Aorta (tissue), 5 donors: ENCODE measurements at regions of chr16 and their contacts with region 1.

Region 1: GRCh38 chr16:78333808-78334207 is 234.4 kb downstream of the WWOX start:
- DNase-seq: no peak
- ATAC-seq: no peak
- H3K4me3 ChIP-seq: no peak overlapping the region
- H3K27ac ChIP-seq: no peak overlapping the region
- H3K4me1 ChIP-seq: no peaks in the 10 kb centered on the region
- H3K27me3 ChIP-seq: no peaks in the 10 kb centered on the region

Region 2: GRCh38 chr16:77850636-77851333 is 483.0 kb before region 1 on chr16:
- intact Hi-C with region 1: no loop called
- DNase-seq: no peak
- ATAC-seq: no peak
- H3K4me3 ChIP-seq: no peak overlapping the region
- H3K27ac ChIP-seq: no peak overlapping the region
- H3K4me1 ChIP-seq: no peaks in the 10 kb centered on the region
- H3K27me3 ChIP-seq: no peaks in the 10 kb centered on the region

Region 3: GRCh38 chr16:78353610-78354275 is 19.9 kb after region 1 on chr16:
- intact Hi-C with region 1: loop called in 1 of 2 experiments (anchors 1 kb)
- DNase-seq: no peak
- ATAC-seq: no peak
- H3K4me3 ChIP-seq: no peak overlapping the region
- H3K27ac ChIP-seq: no peak overlapping the region
- H3K4me1 ChIP-seq: no peaks in the 10 kb centered on the region
- H3K27me3 ChIP-seq: no peaks in the 10 kb centered on the region